ENCODE measurements at regions of chr2 and their contacts with region 1.

Region 1: DNA sequence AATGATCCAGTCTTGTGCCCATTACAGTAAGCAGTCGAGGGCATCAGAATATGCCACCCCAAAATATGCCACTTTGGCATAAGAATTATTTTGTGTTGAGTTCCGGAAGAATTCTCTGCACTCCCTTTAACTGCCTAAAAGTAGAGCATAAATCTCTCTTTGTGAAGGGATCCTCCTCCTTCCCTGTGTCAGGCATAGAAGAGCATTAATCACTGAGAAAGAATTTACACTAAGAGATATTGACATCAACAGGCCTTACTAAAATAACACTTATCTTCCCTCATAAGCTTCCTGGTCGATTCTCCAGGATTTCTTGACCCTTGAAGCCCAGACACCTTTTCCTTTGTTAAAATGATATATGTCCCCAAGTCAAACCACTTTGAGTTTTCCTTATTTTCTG is 27.6 kb upstream of the KYNU start:
- DNase-seq: peak; percentile 7
- H3K4me3 ChIP-seq: no peak overlapping the region
- H3K27ac ChIP-seq: no peak overlapping the region
- H3K4me1 ChIP-seq: peaks cover 4% of the 10 kb centered on the region
- H3K27me3 ChIP-seq: peaks cover 0 to 1% of the 10 kb centered on the region in 2 experiments
- CTCF ChIP-seq: no peak
- POLR2A ChIP-seq: no peak

Region 2: GRCh38 chr2:142180820-142181535 is 668.8 kb before region 1 on chr2:
- CTCF ChIA-PET with region 1: no interaction called
- POLR2A ChIA-PET with region 1: no interaction called
- dilution Hi-C with region 1: no loop called
- intact Hi-C with region 1: loop called (anchors 10 kb)
- DNase-seq: peak; percentile 58
- H3K4me3 ChIP-seq: no peak overlapping the region
- H3K27ac ChIP-seq: no peak overlapping the region
- H3K4me1 ChIP-seq: peaks cover 10% of the 10 kb centered on the region
- H3K27me3 ChIP-seq: no peaks in the 10 kb centered on the region
- CTCF ChIP-seq: peak; percentile 66 to 71
- POLR2A ChIP-seq: no peak

Region 3: DNA sequence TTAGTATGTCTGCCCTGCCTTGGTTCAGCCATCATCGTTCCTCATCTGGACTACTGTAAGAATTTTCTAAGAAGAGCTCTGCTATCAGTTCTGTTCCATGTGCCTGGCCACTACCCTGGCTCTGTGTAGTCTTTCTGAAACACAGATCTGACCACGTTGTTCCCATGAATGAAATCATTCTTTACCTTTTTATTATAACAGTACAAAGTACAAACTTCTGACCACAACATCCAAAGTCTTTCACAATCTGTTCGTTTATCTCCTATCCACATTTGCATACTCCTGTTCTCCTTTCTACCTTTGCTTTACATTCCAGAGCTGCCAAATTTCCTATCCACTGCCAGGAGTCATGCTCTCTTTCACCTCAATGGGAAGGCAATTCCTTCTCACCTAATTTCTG is 434.4 kb before region 1 on chr2:
- CTCF ChIA-PET with region 1: no interaction called
- POLR2A ChIA-PET with region 1: no interaction called
- dilution Hi-C with region 1: no loop called
- intact Hi-C with region 1: no loop called
- DNase-seq: no peak
- H3K4me3 ChIP-seq: no peak overlapping the region
- H3K27ac ChIP-seq: no peak overlapping the region
- H3K4me1 ChIP-seq: no peaks in the 10 kb centered on the region
- H3K27me3 ChIP-seq: no peaks in the 10 kb centered on the region
- CTCF ChIP-seq: no peak
- POLR2A ChIP-seq: no peak

Region 4: DNA sequence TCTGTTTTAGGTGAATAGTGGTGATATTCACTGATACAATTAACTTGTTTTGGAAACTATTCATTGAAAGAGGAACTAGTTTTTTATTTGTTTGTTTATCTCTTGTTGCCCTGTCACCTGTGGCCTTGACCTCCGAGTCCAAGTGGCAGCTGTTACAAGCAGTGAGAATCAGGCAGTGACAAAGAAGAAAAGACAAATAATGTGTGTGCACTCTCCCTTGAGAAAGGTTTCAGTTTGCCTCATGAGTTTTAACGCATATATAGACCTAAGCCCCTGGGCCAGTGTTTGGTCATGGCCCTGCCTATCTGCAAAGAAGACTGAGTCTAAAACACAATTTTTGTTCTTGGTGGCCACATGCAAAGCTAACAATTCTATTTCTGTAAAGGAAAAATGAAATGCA is 42.9 kb after region 1 on chr2:
- CTCF ChIA-PET with region 1: no interaction called
- POLR2A ChIA-PET with region 1: no interaction called
- dilution Hi-C with region 1: no loop called
- intact Hi-C with region 1: no loop called
- DNase-seq: no peak
- H3K4me3 ChIP-seq: no peak overlapping the region
- H3K27ac ChIP-seq: no peak overlapping the region
- H3K4me1 ChIP-seq: no peaks in the 10 kb centered on the region
- H3K27me3 ChIP-seq: no peaks in the 10 kb centered on the region
- CTCF ChIP-seq: no peak
- POLR2A ChIP-seq: no peak